Activated CD4-positive, alpha-beta memory T cell treated with anti-CD3 and anti-CD28 coated beads for 36 hours (primary cell): ENCODE measurements at regions of chr19 and their contacts with region 1.

Region 1: GRCh38 chr19:40633207-40633606 is 32.0 kb downstream of the LTBP4 start:
- DNase-seq: no peak
- H3K4me3 Mint-ChIP-seq: no peak overlapping the region
- H3K27ac Mint-ChIP-seq: no peak overlapping the region
- H3K4me1 Mint-ChIP-seq: peaks cover 7% of the 10 kb centered on the region
- H3K27me3 Mint-ChIP-seq: peaks cover 5% of the 10 kb centered on the region

Region 2: GRCh38 chr19:40410030-40410389 is 223.2 kb before region 1 on chr19:
- CTCF ChIA-PET with region 1: no interaction called
- POLR2A ChIA-PET with region 1: no interaction called
- intact Hi-C with region 1: no loop called
- DNase-seq: no peak
- H3K4me3 Mint-ChIP-seq: no peak overlapping the region
- H3K27ac Mint-ChIP-seq: no peak overlapping the region
- H3K4me1 Mint-ChIP-seq: peaks cover 7% of the 10 kb centered on the region
- H3K27me3 Mint-ChIP-seq: peaks cover 3% of the 10 kb centered on the region

Region 3: DNA sequence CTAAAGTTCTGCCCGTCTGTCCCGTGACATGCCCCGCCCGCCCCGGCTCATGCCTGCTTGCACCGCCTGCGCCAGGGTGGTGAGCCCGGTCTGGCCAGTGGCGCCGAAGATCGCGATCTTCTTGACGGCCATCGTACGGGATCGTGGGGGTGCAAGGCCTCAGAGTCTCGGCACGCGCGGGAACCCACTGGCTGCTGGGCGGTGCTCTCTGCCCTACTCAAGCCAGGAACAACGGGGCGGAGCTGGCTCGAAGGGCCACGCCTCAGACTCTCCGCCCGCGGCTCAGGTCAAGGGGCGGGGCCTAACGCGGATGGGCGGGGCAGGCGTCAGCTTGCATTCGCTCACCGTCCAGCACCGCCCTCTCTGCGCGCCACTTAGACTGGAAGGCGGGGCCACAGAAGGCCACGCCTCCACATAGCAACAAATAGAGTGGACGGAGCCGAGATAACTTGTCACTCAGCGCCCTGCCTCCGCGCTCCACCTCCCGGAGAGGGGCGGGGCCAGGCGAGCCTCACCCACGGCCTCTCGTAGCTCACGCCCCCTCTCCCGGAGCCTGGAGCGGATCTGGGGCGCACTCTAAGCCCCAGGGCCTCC is 167.6 kb before region 1 on chr19 and contains the start of gene BLVRB:
- CTCF ChIA-PET with region 1: interaction called, 25 read pairs
- POLR2A ChIA-PET with region 1: no interaction called
- intact Hi-C with region 1: no loop called
- DNase-seq: peak; percentile 100
- H3K4me3 Mint-ChIP-seq: peak within 1 kb of the TSS; percentile 76
- H3K27ac Mint-ChIP-seq: peak within 1 kb of the TSS; percentile 68
- H3K4me1 Mint-ChIP-seq: peaks cover 31% of the 10 kb centered on the region
- H3K27me3 Mint-ChIP-seq: peaks cover 10% of the 10 kb centered on the region
- total RNA-seq, gene BLVRB: 34.6 to 37.6 TPM

Region 4: GRCh38 chr19:40529093-40529954 is 103.9 kb before region 1 on chr19:
- CTCF ChIA-PET with region 1: interaction called, 19 read pairs
- POLR2A ChIA-PET with region 1: no interaction called
- intact Hi-C with region 1: loop called (anchors 2 kb)
- DNase-seq: peak; percentile 94
- H3K4me3 Mint-ChIP-seq: peak overlapping the region; percentile 51
- H3K27ac Mint-ChIP-seq: peak overlapping the region; percentile 4
- H3K4me1 Mint-ChIP-seq: peaks cover 11% of the 10 kb centered on the region
- H3K27me3 Mint-ChIP-seq: peaks cover 18% of the 10 kb centered on the region

Region 5: DNA sequence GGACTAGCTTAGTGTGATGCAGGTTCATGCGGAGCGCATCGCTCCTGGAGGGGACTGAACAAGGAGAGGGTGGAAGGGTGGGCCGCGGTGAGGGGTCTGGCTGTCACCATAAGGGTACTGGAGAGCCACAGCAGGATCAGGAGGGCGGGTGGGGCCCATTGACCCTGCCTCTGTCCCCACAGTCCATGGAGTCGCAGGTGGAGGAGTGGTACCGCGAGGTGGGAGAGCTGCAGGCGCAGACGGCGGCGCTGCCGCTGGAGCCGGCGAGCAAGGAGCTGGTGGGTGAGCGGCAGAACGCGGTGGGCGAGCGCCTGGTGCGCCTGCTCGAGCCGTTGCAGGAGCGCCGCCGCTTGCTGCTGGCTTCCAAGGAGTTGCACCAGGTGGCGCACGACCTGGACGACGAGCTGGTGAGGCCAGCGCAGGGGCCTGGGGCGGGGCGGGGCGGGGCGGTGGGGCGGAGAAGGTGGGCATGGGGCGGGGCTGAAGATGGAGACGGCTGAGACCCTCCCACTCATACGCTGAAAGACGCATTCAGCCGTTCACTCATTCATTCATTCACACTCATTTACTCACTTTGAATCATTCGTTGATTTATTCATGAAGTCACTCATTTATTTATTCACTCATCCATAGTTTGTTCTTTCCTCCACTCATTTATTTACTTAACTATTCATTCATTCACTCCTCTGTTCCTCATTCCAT is 84.0 kb before region 1 on chr19:
- CTCF ChIA-PET with region 1: interaction called, 36 read pairs
- POLR2A ChIA-PET with region 1: no interaction called
- intact Hi-C with region 1: no loop called
- DNase-seq: peak; percentile 82
- H3K4me3 Mint-ChIP-seq: no peak overlapping the region
- H3K27ac Mint-ChIP-seq: no peak overlapping the region
- H3K4me1 Mint-ChIP-seq: peaks cover 7% of the 10 kb centered on the region
- H3K27me3 Mint-ChIP-seq: peaks cover 47% of the 10 kb centered on the region

Region 6: DNA sequence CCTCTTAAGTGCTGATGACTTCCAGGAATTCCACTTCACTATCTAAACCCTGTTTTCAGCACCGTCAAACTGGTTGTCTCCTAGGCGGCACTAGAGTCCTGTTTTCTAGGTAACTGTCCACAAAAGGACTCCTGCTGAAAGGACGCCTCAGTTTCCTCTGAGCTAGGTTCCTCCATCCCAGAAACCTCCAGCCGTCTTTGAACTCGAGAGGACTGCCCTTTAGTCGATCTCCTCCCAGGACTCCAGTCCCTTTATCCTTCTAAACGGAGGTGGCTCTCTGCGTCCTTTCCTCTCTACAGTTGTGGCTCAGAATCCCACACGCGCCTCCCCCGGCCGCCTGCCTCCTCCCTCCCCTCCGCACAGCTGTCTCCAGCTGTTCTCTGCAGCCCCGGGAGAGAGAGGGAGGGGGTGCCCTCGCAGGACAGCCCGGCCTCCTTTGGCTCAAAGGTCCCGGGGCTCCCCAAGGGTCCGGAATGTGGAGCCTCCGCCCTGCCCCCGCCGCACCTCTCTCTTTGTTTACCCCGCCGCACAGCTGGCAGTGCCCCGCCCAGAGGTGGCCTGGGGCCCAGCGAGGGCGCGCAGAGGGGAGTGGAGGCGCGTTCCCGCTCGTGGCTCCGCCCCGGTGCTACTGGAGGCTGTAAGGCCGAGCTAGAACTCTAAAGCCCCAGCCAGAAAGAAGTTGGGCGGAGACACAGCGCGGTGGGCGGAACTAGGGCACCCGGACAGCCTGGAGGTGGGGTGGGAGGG is 29.6 kb before region 1 on chr19:
- CTCF ChIA-PET with region 1: interaction called, 60 read pairs
- POLR2A ChIA-PET with region 1: no interaction called
- intact Hi-C with region 1: loop called (anchors 2 kb)
- DNase-seq: peak; percentile 99
- H3K4me3 Mint-ChIP-seq: peak overlapping the region; percentile 81
- H3K27ac Mint-ChIP-seq: peak overlapping the region; percentile 87
- H3K4me1 Mint-ChIP-seq: peaks cover 67% of the 10 kb centered on the region
- H3K27me3 Mint-ChIP-seq: peaks cover 19% of the 10 kb centered on the region

Region 7: GRCh38 chr19:40650749-40651305 is 17.6 kb after region 1 on chr19:
- CTCF ChIA-PET with region 1: interaction called, 28 read pairs
- POLR2A ChIA-PET with region 1: no interaction called
- intact Hi-C with region 1: no loop called
- DNase-seq: no peak
- H3K4me3 Mint-ChIP-seq: no peak overlapping the region
- H3K27ac Mint-ChIP-seq: no peak overlapping the region
- H3K4me1 Mint-ChIP-seq: no peaks in the 10 kb centered on the region
- H3K27me3 Mint-ChIP-seq: peaks cover 8% of the 10 kb centered on the region

Region 8: DNA sequence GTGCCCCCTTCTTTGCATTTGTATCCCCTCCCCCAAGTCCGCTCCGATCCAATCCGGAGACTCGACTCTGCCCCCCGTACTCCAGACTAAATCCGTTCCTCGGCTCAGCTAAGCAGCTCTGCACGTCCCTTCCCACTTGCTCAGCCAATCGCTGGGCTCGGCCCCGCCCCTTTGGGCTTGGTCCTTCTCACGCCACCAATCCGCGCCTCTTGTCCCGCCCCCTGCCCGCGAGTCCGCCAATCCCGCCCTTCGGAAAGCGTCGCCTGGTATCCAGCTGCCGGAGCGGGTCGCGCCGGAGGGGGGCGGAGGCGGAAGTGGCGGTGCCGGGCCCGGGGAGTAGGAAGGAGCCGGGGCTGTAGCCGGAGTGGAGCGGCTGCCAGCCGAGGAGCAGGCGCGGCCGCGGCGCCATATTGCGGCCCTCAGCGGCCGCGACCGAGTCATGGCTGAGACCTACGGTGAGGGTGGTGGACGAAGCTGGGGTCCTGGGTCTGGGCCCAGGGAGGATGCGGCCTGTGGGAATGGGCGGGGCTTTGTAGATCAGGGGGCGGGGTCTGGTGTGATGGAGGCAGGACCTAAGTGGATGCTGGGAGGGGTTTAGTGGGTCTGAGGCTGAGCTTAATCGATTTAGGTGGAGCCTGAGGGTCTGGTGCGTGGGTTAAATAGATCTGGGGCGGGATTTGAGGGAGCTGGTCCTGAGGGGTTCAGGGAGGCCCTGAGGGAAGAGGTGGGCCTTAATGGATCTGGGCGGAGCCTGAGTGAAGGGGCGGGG is 144.9 kb after region 1 on chr19 and contains the start of gene RAB4B:
- CTCF ChIA-PET with region 1: interaction called, 12 read pairs
- POLR2A ChIA-PET with region 1: no interaction called
- intact Hi-C with region 1: no loop called
- DNase-seq: peak; percentile 100
- H3K4me3 Mint-ChIP-seq: peak within 1 kb of the TSS; percentile 91
- H3K27ac Mint-ChIP-seq: peak within 1 kb of the TSS; percentile 92
- H3K4me1 Mint-ChIP-seq: peaks cover 37% of the 10 kb centered on the region
- H3K27me3 Mint-ChIP-seq: no peaks in the 10 kb centered on the region
- total RNA-seq, gene RAB4B: 38.0 to 41.7 TPM